Naive thymus-derived CD4-positive, alpha-beta T cell (primary cell): ENCODE measurements at regions of chr7 and their contacts with region 1.

Region 1: GRCh38 chr7:147245292-147245691 is 1128.7 kb downstream of the CNTNAP2 start:
- DNase-seq: no peak
- ATAC-seq: peak; percentile 36
- H3K4me3 ChIP-seq: no peak overlapping the region
- H3K4me3 Mint-ChIP-seq: no peak overlapping the region
- H3K27ac ChIP-seq: no peak overlapping the region
- H3K27ac Mint-ChIP-seq: no peak overlapping the region
- H3K4me1 ChIP-seq: no peaks in the 10 kb centered on the region
- H3K4me1 Mint-ChIP-seq: no peaks in the 10 kb centered on the region
- H3K27me3 ChIP-seq: no peaks in the 10 kb centered on the region
- H3K27me3 Mint-ChIP-seq: no peaks in the 10 kb centered on the region

Region 2: DNA sequence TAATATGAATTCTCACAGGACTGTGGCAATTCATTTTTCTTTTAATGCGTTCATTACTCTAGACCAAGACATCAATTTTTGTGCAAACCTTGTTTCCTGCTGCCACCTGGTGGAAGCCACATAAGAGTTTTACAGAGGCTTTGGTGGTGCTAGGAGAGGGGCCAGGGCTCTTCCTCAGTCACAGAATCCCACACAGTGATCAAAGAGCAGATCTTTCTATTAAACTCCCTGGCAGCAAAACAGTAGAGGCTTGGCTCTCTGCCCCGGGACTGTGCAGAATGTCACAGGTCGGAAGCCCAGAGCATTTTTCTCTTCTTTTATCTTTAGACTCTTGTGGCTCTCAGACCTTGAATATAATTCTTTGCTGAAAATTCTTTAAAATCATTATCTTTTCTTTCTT is 838.8 kb after region 1 on chr7:
- CTCF ChIA-PET with region 1: no interaction called
- POLR2A ChIA-PET with region 1: no interaction called
- intact Hi-C with region 1: loop called in 1 of 2 experiments (anchors 5 kb)
- DNase-seq: no peak
- ATAC-seq: no peak
- H3K4me3 ChIP-seq: no peak overlapping the region
- H3K4me3 Mint-ChIP-seq: no peak overlapping the region
- H3K27ac ChIP-seq: no peak overlapping the region
- H3K27ac Mint-ChIP-seq: no peak overlapping the region
- H3K4me1 ChIP-seq: no peaks in the 10 kb centered on the region
- H3K4me1 Mint-ChIP-seq: no peaks in the 10 kb centered on the region
- H3K27me3 ChIP-seq: no peaks in the 10 kb centered on the region
- H3K27me3 Mint-ChIP-seq: peaks cover 4 to 55% (median 19%) of the 10 kb centered on the region in 5 donors

Region 3: DNA sequence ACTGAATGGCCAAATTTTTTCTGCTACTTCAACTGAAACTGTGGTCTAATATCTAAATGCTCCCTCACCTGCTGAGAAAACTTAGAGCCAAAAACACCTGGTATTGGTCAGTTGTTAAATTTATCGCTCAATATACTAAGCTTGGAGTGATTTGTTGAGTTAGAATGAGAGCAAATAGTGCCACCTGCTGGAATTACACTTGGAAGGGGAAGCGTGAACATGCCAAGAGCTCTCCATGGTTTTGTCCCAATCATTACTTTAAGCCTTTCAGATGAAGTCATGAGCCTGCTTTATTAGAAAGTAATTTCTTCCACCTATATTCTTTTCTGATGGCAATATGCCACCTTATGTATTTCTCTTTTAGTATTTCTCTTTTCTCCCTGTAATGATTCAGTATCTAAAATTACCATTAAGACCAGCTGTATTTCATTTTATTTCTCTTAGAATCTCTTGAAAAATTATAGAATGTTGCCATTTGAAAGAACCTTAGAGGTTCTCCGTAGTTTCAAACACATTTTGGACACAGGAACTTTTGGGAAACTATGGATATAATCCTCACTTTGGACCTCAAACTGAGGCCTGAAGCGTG is 897.5 kb after region 1 on chr7:
- CTCF ChIA-PET with region 1: no interaction called
- POLR2A ChIA-PET with region 1: no interaction called
- intact Hi-C with region 1: loop called in 1 of 2 experiments (anchors 5 kb)
- DNase-seq: no peak
- ATAC-seq: no peak
- H3K4me3 ChIP-seq: no peak overlapping the region
- H3K4me3 Mint-ChIP-seq: no peak overlapping the region
- H3K27ac ChIP-seq: no peak overlapping the region
- H3K27ac Mint-ChIP-seq: no peak overlapping the region
- H3K4me1 ChIP-seq: no peaks in the 10 kb centered on the region
- H3K4me1 Mint-ChIP-seq: no peaks in the 10 kb centered on the region
- H3K27me3 ChIP-seq: no peaks in the 10 kb centered on the region
- H3K27me3 Mint-ChIP-seq: peaks cover 0 to 30% (median 17%) of the 10 kb centered on the region in 5 donors

Region 4: DNA sequence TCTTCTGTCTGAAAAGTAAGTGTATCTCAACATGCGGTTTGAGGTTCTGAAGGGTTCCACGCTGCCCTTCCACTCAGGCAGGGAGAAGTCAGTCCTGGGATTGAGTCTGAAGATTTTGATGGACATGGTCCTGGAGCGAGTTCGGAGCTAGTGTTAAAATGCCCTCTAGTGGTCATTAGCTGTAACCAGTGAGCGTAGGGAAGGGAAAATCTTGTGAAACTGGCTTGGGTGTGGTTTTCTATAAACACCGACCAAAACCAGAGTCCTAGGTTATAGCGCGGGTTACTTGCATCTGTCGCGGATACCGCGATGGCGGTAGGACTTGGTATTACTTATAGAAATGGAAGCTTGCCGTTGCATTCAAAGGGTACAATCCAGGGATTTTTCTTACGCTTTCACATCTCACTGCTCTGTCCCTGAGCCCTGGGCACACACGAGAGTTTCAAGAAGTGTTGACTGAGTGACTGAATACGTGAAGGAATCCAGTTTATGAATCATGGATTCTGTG is 997.1 kb after region 1 on chr7:
- CTCF ChIA-PET with region 1: no interaction called
- POLR2A ChIA-PET with region 1: no interaction called
- intact Hi-C with region 1: loop called in 1 of 2 experiments (anchors 10 kb)
- DNase-seq: peak in 1 of 9 donors; percentile 4
- ATAC-seq: no peak
- H3K4me3 ChIP-seq: no peak overlapping the region
- H3K4me3 Mint-ChIP-seq: no peak overlapping the region
- H3K27ac ChIP-seq: no peak overlapping the region
- H3K27ac Mint-ChIP-seq: no peak overlapping the region
- H3K4me1 ChIP-seq: no peaks in the 10 kb centered on the region
- H3K4me1 Mint-ChIP-seq: peaks cover 0 to 7% (median 5%) of the 10 kb centered on the region in 7 donors
- H3K27me3 ChIP-seq: no peaks in the 10 kb centered on the region
- H3K27me3 Mint-ChIP-seq: peaks cover 25 to 38% (median 30%) of the 10 kb centered on the region in 5 donors

Region 5: DNA sequence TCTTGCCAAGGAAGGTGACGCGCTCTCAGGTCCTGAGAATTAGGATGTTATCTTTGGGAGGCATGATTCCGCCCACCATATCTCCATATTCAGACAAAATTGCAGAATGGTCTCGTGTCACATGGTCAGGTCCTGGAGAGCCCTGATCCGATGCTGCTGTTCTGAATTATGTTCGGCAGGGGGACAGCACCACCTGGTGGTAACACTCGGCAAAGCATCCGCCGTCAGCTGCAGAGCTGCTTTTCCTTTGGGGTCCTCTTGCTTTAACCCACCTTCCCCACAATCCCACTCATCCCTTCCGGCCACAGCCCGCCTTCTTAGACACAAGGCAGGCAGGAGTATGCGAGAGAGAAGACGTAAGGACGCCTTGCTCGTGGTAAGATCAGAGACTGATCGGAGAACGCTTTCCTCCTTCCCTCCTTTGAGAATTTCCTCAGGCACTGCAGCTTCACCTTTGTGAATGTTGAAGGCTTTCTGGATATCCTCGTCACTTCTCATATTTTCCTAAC is 1017.5 kb after region 1 on chr7:
- CTCF ChIA-PET with region 1: no interaction called
- POLR2A ChIA-PET with region 1: no interaction called
- intact Hi-C with region 1: loop called in 1 of 2 experiments (anchors 5 kb)
- DNase-seq: peak; percentile 15 to 63 (median 44)
- ATAC-seq: peak; percentile 85
- H3K4me3 ChIP-seq: no peak overlapping the region
- H3K4me3 Mint-ChIP-seq: peak overlapping the region; percentile 13 to 75 (median 60)
- H3K27ac ChIP-seq: no peak overlapping the region
- H3K27ac Mint-ChIP-seq: no peak overlapping the region
- H3K4me1 ChIP-seq: peaks cover 0 to 5% of the 10 kb centered on the region in 2 donors
- H3K4me1 Mint-ChIP-seq: peaks cover 8 to 15% (median 9%) of the 10 kb centered on the region in 7 donors
- H3K27me3 ChIP-seq: no peaks in the 10 kb centered on the region
- H3K27me3 Mint-ChIP-seq: peaks cover 0 to 16% (median 7%) of the 10 kb centered on the region in 5 donors